ENCODE measurements at regions of chr1 and their contacts with region 1.

Region 1: DNA sequence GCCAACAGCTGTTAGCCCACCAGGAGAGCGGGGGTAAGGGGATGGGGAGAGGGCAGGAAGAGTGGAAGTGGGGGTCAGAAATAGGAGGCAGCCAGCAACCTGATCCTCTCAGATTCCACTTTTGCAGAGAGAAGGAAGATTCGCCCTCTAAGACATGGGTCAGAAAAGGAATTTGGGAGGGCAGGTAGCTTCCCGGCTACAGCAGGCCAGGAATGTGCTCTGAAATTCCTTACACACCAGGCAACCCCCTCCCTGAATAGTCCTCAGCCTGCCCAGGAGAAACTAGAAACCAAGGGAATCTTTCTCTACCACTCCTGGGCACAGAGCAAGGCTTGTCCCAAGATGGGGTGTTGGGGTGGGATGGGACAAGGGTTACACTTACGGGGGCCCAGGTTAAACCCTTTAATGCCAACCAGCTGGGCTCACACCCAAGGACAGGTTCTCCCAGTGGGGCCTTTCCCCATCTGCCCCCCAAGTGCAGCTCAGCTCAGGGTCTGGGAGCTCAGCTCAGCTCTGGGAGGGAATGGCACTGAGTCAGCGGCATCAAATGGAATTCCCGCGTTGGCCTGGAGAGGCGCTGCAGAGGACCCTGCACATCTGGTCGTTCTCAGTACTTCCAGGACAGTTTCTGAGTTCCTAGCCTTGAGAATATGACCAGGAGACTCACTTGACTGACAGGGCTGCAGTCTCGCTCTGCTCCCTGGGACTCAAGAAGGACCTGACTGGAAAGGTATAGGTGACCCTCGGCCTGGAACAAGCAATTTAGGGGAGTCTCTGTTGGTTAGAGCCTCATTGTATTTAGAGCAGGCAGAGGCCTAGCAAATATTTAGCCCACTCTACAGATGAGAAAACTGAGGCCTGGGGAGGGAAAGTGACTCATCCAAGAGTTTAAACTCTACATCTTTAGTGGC is 761 bp downstream of the TNNT2 start:
- DNase-seq: peak; percentile 37 to 54 (median 48)
- ATAC-seq: peak; percentile 57
- H3K4me3 ChIP-seq: no peak overlapping the region
- H3K27ac ChIP-seq: no peak overlapping the region
- H3K4me1 ChIP-seq: peaks cover 17% of the 10 kb centered on the region
- H3K27me3 ChIP-seq: no peaks in the 10 kb centered on the region
- CTCF ChIP-seq: peak in 6 of 7 experiments; percentile 31 to 57 (median 50)
- POLR2A ChIP-seq: no peak

Region 2: GRCh38 chr1:201414051-201414738 is 37.5 kb after region 1 on chr1:
- intact Hi-C with region 1: loop called (anchors 5 kb)
- DNase-seq: no peak
- ATAC-seq: no peak
- H3K4me3 ChIP-seq: no peak overlapping the region
- H3K27ac ChIP-seq: no peak overlapping the region
- H3K4me1 ChIP-seq: no peaks in the 10 kb centered on the region
- H3K27me3 ChIP-seq: no peaks in the 10 kb centered on the region
- CTCF ChIP-seq: no peak
- POLR2A ChIP-seq: no peak

Measured in body of pancreas (tissue), 4 donors.